Spleen (tissue), 13 donors: ENCODE measurements at regions of chr11 and their contacts with region 1.

Region 1: DNA sequence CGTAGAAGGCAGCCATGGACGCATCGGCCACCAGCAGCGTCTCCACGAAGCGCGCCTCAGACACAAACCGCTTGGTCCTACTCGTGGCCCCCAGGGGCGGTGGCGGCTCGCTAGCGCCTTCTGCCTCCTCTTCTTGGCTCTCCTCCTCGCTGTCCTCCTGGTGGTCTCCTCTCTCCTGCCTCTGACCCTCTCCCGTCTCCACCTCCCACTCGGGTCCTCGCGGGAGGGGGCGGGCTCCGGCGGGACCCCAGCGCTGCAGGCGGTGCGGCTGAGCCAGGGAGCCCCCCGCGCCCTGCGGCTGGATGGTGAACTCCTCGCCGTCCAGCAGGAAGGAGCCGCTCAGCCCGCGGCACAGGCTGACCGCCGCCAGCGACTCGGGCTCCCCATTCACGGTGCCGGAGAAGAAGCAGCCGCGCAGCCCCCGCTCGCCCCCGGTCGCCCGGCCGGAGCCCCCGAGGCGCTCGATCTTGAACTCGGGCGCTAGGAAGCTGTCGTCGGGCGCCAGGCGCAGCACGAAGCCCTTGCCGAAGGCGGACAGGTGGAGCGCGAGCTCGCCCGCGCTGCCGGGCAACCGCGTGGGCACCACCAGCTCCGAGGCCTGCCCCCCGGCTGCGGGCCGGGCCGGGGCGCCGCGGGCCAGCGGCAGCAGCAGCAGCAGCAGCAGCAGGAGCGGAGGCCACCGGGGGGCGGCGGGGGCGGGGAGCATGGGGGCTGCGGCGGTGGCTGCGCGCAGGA is 661 bp downstream of the ADAMTS8 start:
- DNase-seq: no peak
- H3K4me3 ChIP-seq: peak overlapping the region; percentile 6 to 66 (median 32)
- H3K27ac ChIP-seq: no peak overlapping the region
- H3K4me1 ChIP-seq: peaks cover 7 to 26% (median 16%) of the 10 kb centered on the region in 6 donors
- H3K27me3 ChIP-seq: peaks cover 0 to 84% (median 47%) of the 10 kb centered on the region in 7 donors
- CTCF ChIP-seq: peak in 2 of 11 experiments; percentile 17 to 28
- POLR2A ChIP-seq: no peak

Region 2: DNA sequence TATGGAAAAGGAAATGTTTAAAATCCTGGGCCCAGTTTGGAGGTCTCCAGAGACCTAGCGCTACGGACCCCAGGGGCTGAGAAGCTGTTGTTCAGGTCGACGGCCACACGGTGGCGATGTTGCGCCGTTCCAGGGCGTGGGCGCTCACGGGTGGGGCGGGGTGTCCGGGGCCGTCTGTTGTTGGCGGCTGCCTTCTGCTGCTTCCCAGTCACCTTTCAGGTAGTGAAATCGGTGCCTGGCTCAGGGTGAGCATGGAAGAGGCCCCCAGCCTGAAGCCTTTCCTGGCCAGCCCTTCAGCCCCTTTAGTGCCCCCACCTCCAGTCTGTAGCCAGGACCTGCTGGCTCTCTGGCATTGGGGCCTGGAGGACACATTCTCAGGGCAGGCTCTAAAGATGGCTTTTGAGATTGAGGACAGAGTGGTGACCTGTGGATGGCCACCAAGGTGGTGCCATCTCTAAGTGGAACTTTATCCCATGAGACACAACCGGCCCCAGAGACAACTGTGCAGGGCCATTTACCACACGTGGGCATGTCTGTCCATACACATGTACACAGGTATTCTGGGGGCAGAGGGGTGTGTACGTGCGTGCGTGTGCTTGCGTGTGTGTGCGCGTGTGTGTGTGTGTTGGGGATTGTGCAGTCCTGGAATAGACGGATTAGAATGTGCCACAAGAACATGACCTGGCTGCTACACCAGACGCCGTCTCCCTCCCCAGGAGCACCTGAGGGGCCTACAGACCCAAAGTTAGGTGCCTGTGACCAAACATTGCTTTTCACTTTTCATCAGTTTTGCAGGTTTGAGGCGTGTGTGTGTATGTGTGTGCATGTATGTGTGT is 214.4 kb before region 1 on chr11:
- intact Hi-C with region 1: loop called (anchors 10 kb)
- DNase-seq: peak; percentile 95
- H3K4me3 ChIP-seq: peak overlapping the region in 1 of 8 donors; percentile 36
- H3K27ac ChIP-seq: no peak overlapping the region
- H3K4me1 ChIP-seq: peaks cover 0 to 9% (median 8%) of the 10 kb centered on the region in 6 donors
- H3K27me3 ChIP-seq: peaks cover 0 to 14% (median 0%) of the 10 kb centered on the region in 7 donors
- CTCF ChIP-seq: peak; percentile 77 to 96 (median 92)
- POLR2A ChIP-seq: no peak